ENCODE measurements at regions of chr7 and their contacts with region 1.

Region 1: GRCh38 chr7:111329367-111330234 is 232.7 kb downstream of the IMMP2L start:
- DNase-seq: no peak
- H3K4me3 ChIP-seq: no peak overlapping the region
- CTCF ChIP-seq: no peak

Region 2: GRCh38 chr7:111735661-111736551 is 406.3 kb after region 1 on chr7:
- CTCF ChIA-PET with region 1: interaction called, 11 read pairs
- POLR2A ChIA-PET with region 1: no interaction called
- DNase-seq: peak; percentile 37
- H3K4me3 ChIP-seq: no peak overlapping the region
- CTCF ChIP-seq: peak; percentile 69